ENCODE measurements at regions of chr22 and their contacts with region 1.

Region 1: DNA sequence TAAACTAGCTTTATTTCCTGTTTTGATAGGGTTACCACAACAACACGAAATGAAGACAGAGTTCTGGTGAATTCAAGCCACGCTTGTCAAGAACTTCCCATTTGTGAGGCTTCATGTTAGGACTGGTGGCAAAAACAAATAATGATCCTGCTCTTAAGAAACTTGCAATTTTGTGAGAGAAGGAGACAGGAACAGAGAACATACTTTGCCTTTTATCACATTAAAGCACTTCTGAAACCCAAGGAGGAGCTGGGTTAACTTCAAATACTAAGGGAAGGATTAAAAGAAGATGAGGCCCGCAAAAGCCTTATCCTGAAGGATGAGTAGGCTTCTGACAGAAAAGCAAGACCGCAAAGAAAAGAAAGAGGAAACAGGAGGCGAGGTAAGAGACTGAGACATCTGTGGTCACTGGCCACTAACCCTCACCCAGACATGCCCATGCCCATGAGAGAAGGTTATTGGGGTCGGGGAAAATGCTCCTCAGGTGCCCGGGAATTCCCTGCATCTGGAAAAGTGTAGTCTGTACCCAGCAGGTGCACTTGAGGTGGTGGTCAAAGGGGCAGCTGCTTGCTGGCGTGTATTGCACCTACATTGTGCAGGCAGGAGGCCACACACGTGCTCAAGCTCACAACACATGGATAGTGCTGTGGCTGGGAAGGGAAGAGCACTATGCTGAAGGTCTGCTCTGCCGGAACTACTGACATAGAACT is 50.5 kb downstream of the MAPK1 start:
- DNase-seq: peak; percentile 84
- ATAC-seq: peak; percentile 97
- H3K4me3 ChIP-seq: peak overlapping the region; percentile 16; the same call in 1 of the 2 replicates
- H3K27ac ChIP-seq: peak overlapping the region; percentile 89
- H3K4me1 ChIP-seq: peaks cover 16% of the 10 kb centered on the region
- H3K27me3 ChIP-seq: no peaks in the 10 kb centered on the region
- CTCF ChIP-seq: no peak

Region 2: GRCh38 chr22:21867528-21868266 is 50.8 kb after region 1 on chr22 and contains the start of gene MAPK1:
- CTCF ChIA-PET with region 1: no interaction called
- POLR2A ChIA-PET with region 1: no interaction called
- intact Hi-C with region 1: loop called (anchors 5 kb)
- DNase-seq: peak; percentile 77
- ATAC-seq: peak; percentile 93
- H3K4me3 ChIP-seq: peak within 1 kb of the TSS; percentile 90
- H3K27ac ChIP-seq: no peak within 1 kb of the TSS
- H3K4me1 ChIP-seq: peaks cover 17% of the 10 kb centered on the region
- H3K27me3 ChIP-seq: no peaks in the 10 kb centered on the region
- CTCF ChIP-seq: peak; percentile 35
- total RNA-seq, gene MAPK1: 25.1 and 32.8 TPM in 2 replicates